ENCODE measurements at regions of chr2 and their contacts with region 1.

Region 1: GRCh38 chr2:28904295-28904694 is 9.8 kb downstream of the WDR43 start:
- DNase-seq: peak; percentile 59
- ATAC-seq: peak; percentile 74
- H3K4me3 ChIP-seq: no peak overlapping the region
- H3K27ac ChIP-seq: peak overlapping the region; percentile 65; the same call in 1 of the 2 replicates
- H3K4me1 ChIP-seq: peaks cover 16% of the 10 kb centered on the region
- H3K27me3 ChIP-seq: no peaks in the 10 kb centered on the region
- CTCF ChIP-seq: no peak
- POLR2A ChIP-seq: no peak
- RAD21 ChIP-seq: no peak

Region 2: GRCh38 chr2:28594289-28595108 is 309.8 kb before region 1 on chr2:
- CTCF ChIA-PET with region 1: no interaction called
- POLR2A ChIA-PET with region 1: no interaction called
- dilution Hi-C with region 1: no loop called
- in situ Hi-C with region 1: loop called (anchors 25 kb)
- intact Hi-C with region 1: no loop called
- DNase-seq: peak; percentile 82
- ATAC-seq: peak; percentile 83
- H3K4me3 ChIP-seq: no peak overlapping the region
- H3K27ac ChIP-seq: peak overlapping the region; percentile 5; the same call in 1 of the 2 replicates
- H3K4me1 ChIP-seq: peaks cover 5% of the 10 kb centered on the region
- H3K27me3 ChIP-seq: no peaks in the 10 kb centered on the region
- CTCF ChIP-seq: peak; percentile 83
- POLR2A ChIP-seq: no peak
- RAD21 ChIP-seq: peak; percentile 88

Measured in IMR-90 (cell line).